MCF 10A (cell line): ENCODE measurements at regions of chr2 and their contacts with region 1.

Region 1: DNA sequence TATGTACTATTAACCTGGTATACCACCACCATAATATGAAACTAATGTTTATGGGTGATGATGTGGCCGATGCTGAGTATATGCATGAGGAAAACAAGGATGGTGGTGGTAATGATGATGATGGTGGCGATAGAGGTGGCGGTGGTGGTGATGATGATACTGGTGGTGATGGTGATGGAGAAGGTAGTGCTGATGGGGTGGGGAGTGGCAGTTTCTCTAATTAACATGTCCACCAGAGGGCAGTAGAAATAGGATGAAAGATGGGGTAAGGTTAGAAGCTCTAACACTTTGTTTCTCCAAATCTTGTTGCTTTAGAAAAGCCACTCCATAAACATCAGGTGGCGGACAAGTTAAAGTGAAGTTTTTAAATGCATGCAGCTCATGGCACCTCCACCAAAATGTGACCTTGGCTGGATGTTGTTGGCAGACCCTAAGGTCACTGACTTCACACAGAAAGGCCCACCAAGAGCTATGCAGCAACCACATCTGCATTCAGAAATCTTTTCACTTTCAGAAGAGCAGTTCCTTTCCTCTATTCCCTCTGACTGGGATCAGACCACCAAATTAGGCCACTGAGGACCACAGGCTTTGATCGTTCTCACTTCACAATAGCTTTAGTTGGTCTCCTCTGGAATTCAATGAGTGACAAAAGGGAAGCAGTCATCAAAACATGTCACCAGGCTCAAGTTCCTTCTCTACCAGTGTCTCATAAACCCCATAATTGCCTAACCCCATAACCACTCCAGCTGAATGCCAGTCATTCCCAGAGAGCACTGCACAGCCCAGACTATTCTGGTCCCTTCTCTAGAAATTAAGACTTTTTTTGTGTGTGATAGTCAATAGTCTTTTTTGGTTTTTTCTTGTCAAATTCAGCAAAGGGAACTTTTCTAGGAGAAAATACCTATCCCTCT is 7.5 kb upstream of the BCL11A start:
- DNase-seq: peak; percentile 58
- H3K4me3 Mint-ChIP-seq: no peak overlapping the region
- H3K27ac Mint-ChIP-seq: no peak overlapping the region
- H3K4me1 Mint-ChIP-seq: no peaks in the 10 kb centered on the region
- H3K27me3 Mint-ChIP-seq: peaks cover 37% of the 10 kb centered on the region
- CTCF ChIP-seq: peak; percentile 41

Region 2: GRCh38 chr2:60297296-60298005 is 263.5 kb before region 1 on chr2:
- CTCF ChIA-PET with region 1: no interaction called
- POLR2A ChIA-PET with region 1: no interaction called
- intact Hi-C with region 1: no loop called
- DNase-seq: no peak
- H3K4me3 Mint-ChIP-seq: no peak overlapping the region
- H3K27ac Mint-ChIP-seq: no peak overlapping the region
- H3K4me1 Mint-ChIP-seq: no peaks in the 10 kb centered on the region
- H3K27me3 Mint-ChIP-seq: no peaks in the 10 kb centered on the region
- CTCF ChIP-seq: no peak

Region 3: DNA sequence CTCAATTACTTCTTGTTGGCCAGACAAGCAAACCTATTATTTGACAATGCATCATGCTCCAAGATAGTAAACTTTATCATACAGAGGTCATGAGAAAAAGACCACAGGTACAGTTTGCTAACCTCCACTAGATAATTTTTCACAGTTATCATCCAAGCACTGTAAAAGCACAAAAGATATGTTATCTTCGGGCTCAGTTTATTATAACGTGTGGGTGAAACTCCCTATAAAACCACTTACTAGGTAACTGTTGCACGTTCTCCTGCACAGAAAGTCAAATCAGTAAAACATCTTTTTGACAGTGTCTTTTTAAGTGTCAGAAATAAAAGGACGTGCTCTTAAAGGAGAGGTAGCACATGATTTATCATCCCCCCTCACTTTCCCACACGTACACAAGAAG is 87.2 kb after region 1 on chr2:
- CTCF ChIA-PET with region 1: interaction called, 46 read pairs
- POLR2A ChIA-PET with region 1: no interaction called
- intact Hi-C with region 1: no loop called
- DNase-seq: no peak
- H3K4me3 Mint-ChIP-seq: no peak overlapping the region
- H3K27ac Mint-ChIP-seq: no peak overlapping the region
- H3K4me1 Mint-ChIP-seq: no peaks in the 10 kb centered on the region
- H3K27me3 Mint-ChIP-seq: peaks cover 14% of the 10 kb centered on the region
- CTCF ChIP-seq: no peak

Region 4: DNA sequence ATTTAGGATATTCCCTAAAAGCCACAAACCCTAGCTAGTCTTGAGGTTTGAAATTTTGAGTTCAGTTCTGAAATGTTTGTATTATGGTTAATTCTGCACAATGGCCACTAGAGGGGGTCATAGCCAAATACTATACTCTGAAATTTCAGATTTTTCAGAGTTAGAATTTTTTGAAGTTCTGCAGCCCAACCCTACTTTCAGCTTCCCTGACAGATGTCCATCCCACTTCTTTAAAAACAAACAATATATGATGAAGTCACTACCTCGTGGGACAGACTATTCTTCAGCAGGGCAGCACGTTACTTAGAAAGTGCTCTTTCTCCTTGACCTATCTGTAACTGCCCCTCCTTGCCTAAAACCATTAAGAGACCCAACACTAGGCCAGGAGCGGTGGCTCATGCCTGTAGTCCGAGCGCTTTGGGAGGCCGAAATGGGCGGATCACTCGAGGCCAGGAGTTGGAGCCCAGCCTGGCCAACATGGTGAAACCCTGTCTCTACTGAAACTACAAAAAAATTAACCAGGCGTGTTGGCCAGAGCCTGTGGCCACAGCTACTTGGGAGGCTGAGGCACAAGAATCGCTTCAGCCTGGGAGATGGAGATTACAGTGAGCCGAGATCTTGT is 146.9 kb after region 1 on chr2:
- CTCF ChIA-PET with region 1: no interaction called
- POLR2A ChIA-PET with region 1: no interaction called
- intact Hi-C with region 1: no loop called
- DNase-seq: peak; percentile 65
- H3K4me3 Mint-ChIP-seq: no peak overlapping the region
- H3K27ac Mint-ChIP-seq: no peak overlapping the region
- H3K4me1 Mint-ChIP-seq: peaks cover 11% of the 10 kb centered on the region
- H3K27me3 Mint-ChIP-seq: no peaks in the 10 kb centered on the region
- CTCF ChIP-seq: peak; percentile 63